Sigmoid colon (tissue), 7 donors: ENCODE measurements at regions of chr16 and their contacts with region 1.

Region 1: GRCh38 chr16:9008601-9009260 is 45.0 kb upstream of the USP7 start:
- DNase-seq: peak; percentile 78
- H3K4me3 ChIP-seq: peak overlapping the region in 3 of 4 donors; percentile 13 to 28 (median 18)
- H3K27ac ChIP-seq: no peak overlapping the region
- H3K4me1 ChIP-seq: peaks cover 0 to 8% (median 5%) of the 10 kb centered on the region in 4 donors
- H3K27me3 ChIP-seq: peaks cover 0 to 8% (median 0%) of the 10 kb centered on the region in 3 donors
- CTCF ChIP-seq: peak; percentile 57 to 82 (median 66)
- EP300 ChIP-seq: no peak
- POLR2A ChIP-seq: no peak

Region 2: GRCh38 chr16:8567750-8568617 is 440.7 kb before region 1 on chr16:
- intact Hi-C with region 1: loop called (anchors 5 kb)
- DNase-seq: peak; percentile 82
- H3K4me3 ChIP-seq: no peak overlapping the region
- H3K27ac ChIP-seq: no peak overlapping the region
- H3K4me1 ChIP-seq: peaks cover 0 to 13% (median 0%) of the 10 kb centered on the region in 4 donors
- H3K27me3 ChIP-seq: peaks cover 0 to 15% (median 13%) of the 10 kb centered on the region in 3 donors
- CTCF ChIP-seq: peak; percentile 89 to 96 (median 96)
- EP300 ChIP-seq: no peak
- POLR2A ChIP-seq: no peak

Region 3: GRCh38 chr16:8899709-8900317 is 108.9 kb before region 1 on chr16:
- intact Hi-C with region 1: loop called (anchors 5 kb)
- DNase-seq: no peak
- H3K4me3 ChIP-seq: no peak overlapping the region
- H3K27ac ChIP-seq: no peak overlapping the region
- H3K4me1 ChIP-seq: no peaks in the 10 kb centered on the region
- H3K27me3 ChIP-seq: no peaks in the 10 kb centered on the region
- CTCF ChIP-seq: no peak
- EP300 ChIP-seq: no peak
- POLR2A ChIP-seq: no peak

Region 4: GRCh38 chr16:8936421-8936820 is 72.3 kb before region 1 on chr16:
- intact Hi-C with region 1: no loop called
- DNase-seq: no peak
- H3K4me3 ChIP-seq: no peak overlapping the region
- H3K27ac ChIP-seq: no peak overlapping the region
- H3K4me1 ChIP-seq: peaks cover 0 to 64% (median 53%) of the 10 kb centered on the region in 4 donors
- H3K27me3 ChIP-seq: no peaks in the 10 kb centered on the region
- CTCF ChIP-seq: peak in 2 of 4 experiments; percentile 15 to 24
- EP300 ChIP-seq: no peak
- POLR2A ChIP-seq: no peak

Region 5: GRCh38 chr16:8963825-8964441 is 44.8 kb before region 1 on chr16 and contains the start of gene USP7:
- intact Hi-C with region 1: loop called (anchors 2 kb)
- DNase-seq: peak; percentile 95
- H3K4me3 ChIP-seq: peak within 1 kb of the TSS; percentile 57 to 91 (median 72)
- H3K27ac ChIP-seq: peak within 1 kb of the TSS; percentile 81 to 89 (median 88)
- H3K4me1 ChIP-seq: peaks cover 0 to 44% (median 41%) of the 10 kb centered on the region in 4 donors
- H3K27me3 ChIP-seq: no peaks in the 10 kb centered on the region
- CTCF ChIP-seq: no peak
- EP300 ChIP-seq: no peak
- POLR2A ChIP-seq: no peak
- total RNA-seq, gene USP7: 64.9 to 84.5 (median 80.5) TPM

Region 6: GRCh38 chr16:9081843-9082242 is 73.1 kb after region 1 on chr16:
- intact Hi-C with region 1: no loop called
- DNase-seq: no peak
- H3K4me3 ChIP-seq: no peak overlapping the region
- H3K27ac ChIP-seq: no peak overlapping the region
- H3K4me1 ChIP-seq: no peaks in the 10 kb centered on the region
- H3K27me3 ChIP-seq: no peaks in the 10 kb centered on the region
- CTCF ChIP-seq: no peak
- EP300 ChIP-seq: no peak
- POLR2A ChIP-seq: no peak

Region 7: DNA sequence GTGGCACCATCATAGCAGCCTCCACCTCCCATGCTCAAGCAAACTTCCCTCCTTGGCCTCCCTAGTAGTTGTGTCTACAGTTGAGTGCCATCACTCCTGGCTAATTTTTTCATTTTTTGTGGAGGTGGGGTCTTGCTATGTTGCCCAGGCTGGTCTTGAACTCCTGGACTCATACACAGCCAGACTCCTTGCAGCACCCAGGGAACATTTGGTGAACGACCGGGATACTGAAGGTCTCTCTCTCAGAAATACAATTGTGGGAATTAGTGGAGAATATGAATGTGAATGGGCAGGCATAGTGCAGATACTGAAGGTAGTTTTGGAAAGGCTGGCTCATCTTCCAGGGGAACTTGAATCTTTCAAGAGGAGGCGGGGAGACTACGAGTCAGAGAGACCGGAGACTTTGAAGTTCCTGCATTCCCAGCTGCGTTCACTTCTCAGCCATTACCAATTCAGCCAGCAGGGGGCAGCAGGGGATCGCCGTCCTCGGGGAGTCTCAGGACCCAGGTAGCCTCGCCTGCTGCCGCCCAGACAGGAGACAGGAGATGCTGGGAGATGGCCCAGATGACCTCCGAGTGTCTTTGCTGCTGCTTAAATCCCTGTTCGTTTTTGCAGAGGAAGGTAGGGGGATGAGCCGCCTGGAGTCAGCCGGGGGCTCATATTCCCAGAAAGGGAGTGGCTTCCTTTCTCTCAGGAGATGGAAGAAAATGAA is 151.3 kb after region 1 on chr16:
- intact Hi-C with region 1: no loop called
- DNase-seq: no peak
- H3K4me3 ChIP-seq: no peak overlapping the region
- H3K27ac ChIP-seq: no peak overlapping the region
- H3K4me1 ChIP-seq: peaks cover 0 to 6% (median 0%) of the 10 kb centered on the region in 4 donors
- H3K27me3 ChIP-seq: peaks cover 0 to 7% (median 0%) of the 10 kb centered on the region in 3 donors
- CTCF ChIP-seq: peak in 3 of 4 experiments; percentile 42 to 55 (median 53)
- EP300 ChIP-seq: no peak
- POLR2A ChIP-seq: no peak